ENCODE measurements at regions of chr10 and their contacts with region 1.

Region 1: GRCh38 chr10:123229927-123230632 is 75.9 kb downstream of the BUB3 start:
- DNase-seq: no peak
- ATAC-seq: no peak
- H3K4me3 ChIP-seq: no peak overlapping the region
- H3K27ac ChIP-seq: no peak overlapping the region
- H3K4me1 ChIP-seq: no peaks in the 10 kb centered on the region
- H3K27me3 ChIP-seq: no peaks in the 10 kb centered on the region
- CTCF ChIP-seq: no peak
- EP300 ChIP-seq: no peak
- POLR2A ChIP-seq: no peak
- RAD21 ChIP-seq: no peak

Region 2: GRCh38 chr10:123132576-123133477 is 97.3 kb before region 1 on chr10:
- CTCF ChIA-PET with region 1: no interaction called
- POLR2A ChIA-PET with region 1: no interaction called
- RAD21 ChIA-PET with region 1: no interaction called
- SMC1A ChIA-PET with region 1: no interaction called
- in situ Hi-C with region 1: no loop called
- intact Hi-C with region 1: no loop called
- DNase-seq: peak; percentile 40
- ATAC-seq: peak; percentile 88
- H3K4me3 ChIP-seq: peak overlapping the region; percentile 86
- H3K27ac ChIP-seq: no peak overlapping the region
- H3K4me1 ChIP-seq: peaks cover 7% of the 10 kb centered on the region
- H3K27me3 ChIP-seq: peaks cover 2 to 15% of the 10 kb centered on the region in 2 experiments; a peak in 2 of 4 replicates
- CTCF ChIP-seq: peak; percentile 90 to 97 (median 94); a peak in 5 of 6 replicates
- EP300 ChIP-seq: no peak
- POLR2A ChIP-seq: no peak
- RAD21 ChIP-seq: peak; percentile 85

Region 3: GRCh38 chr10:123380497-123381085 is 150.5 kb after region 1 on chr10:
- CTCF ChIA-PET with region 1: interaction called, 13 read pairs
- POLR2A ChIA-PET with region 1: no interaction called
- RAD21 ChIA-PET with region 1: interaction called, 3 read pairs
- SMC1A ChIA-PET with region 1: interaction called, 3 read pairs
- in situ Hi-C with region 1: no loop called
- intact Hi-C with region 1: loop called (anchors 1 kb)
- DNase-seq: no peak
- ATAC-seq: peak; percentile 50; the same call in 1 of the 3 replicates
- H3K4me3 ChIP-seq: no peak overlapping the region
- H3K27ac ChIP-seq: no peak overlapping the region
- H3K4me1 ChIP-seq: no peaks in the 10 kb centered on the region
- H3K27me3 ChIP-seq: no peaks in the 10 kb centered on the region
- CTCF ChIP-seq: peak; percentile 32 to 48 (median 39); a peak in 5 of 6 replicates
- EP300 ChIP-seq: no peak
- POLR2A ChIP-seq: no peak
- RAD21 ChIP-seq: peak; percentile 69

Region 4: GRCh38 chr10:123559066-123559822 is 329.2 kb after region 1 on chr10:
- CTCF ChIA-PET with region 1: interaction called, 3 read pairs
- POLR2A ChIA-PET with region 1: no interaction called
- RAD21 ChIA-PET with region 1: no interaction called
- SMC1A ChIA-PET with region 1: no interaction called
- in situ Hi-C with region 1: no loop called
- intact Hi-C with region 1: loop called (anchors 2 kb)
- DNase-seq: no peak
- ATAC-seq: peak; percentile 91
- H3K4me3 ChIP-seq: no peak overlapping the region
- H3K27ac ChIP-seq: peak overlapping the region; percentile 18; the same call in 1 of the 2 replicates
- H3K4me1 ChIP-seq: peaks cover 45% of the 10 kb centered on the region
- H3K27me3 ChIP-seq: no peaks in the 10 kb centered on the region; a peak in 1 of 4 replicates
- CTCF ChIP-seq: peak; percentile 84 to 98 (median 98)
- EP300 ChIP-seq: no peak
- POLR2A ChIP-seq: no peak
- RAD21 ChIP-seq: peak; percentile 100

Measured in GM12878 (cell line).